ENCODE measurements at regions of chr2 and their contacts with region 1.

Region 1: DNA sequence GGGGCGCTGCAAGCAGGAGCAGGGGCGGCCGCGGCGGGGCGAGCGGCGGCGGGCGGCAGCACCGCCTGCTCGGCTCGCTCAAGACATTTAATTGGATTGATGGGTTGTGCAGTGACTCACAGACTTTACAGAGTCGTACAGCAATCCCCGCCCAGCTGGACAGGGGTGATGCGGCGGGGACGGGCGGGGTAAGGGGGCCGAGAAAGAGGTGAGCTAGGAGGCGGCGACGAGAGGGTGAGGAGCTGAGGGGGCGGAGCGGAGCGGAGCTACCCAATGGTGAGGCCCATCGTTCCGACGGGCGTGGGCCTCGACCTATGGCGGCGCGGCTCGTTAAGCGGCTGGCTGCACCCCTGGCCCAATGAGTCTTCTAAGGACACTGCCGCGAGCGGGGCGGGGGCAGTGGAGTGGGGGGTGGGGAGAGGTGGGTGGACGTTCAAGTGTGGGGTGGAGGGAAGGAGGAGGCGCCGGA is 97.1 kb upstream of the SERTAD2 start:
- DNase-seq: peak; percentile 97 to 99 (median 97)
- ATAC-seq: peak; percentile 91
- H3K4me3 ChIP-seq: peak overlapping the region; percentile 79
- H3K27ac ChIP-seq: peak overlapping the region; percentile 84
- H3K4me1 ChIP-seq: peaks cover 11 to 18% of the 10 kb centered on the region in 2 experiments; a peak in 4 of 5 replicates
- H3K27me3 ChIP-seq: no peaks in the 10 kb centered on the region
- CTCF ChIP-seq: peak in 1 of 3 experiments; percentile 53; a peak in 2 of 6 replicates
- EP300 ChIP-seq: no peak
- POLR2A ChIP-seq: no peak
- RAD21 ChIP-seq: peak in 1 of 2 experiments; percentile 55; a peak in 2 of 4 replicates

Region 2: DNA sequence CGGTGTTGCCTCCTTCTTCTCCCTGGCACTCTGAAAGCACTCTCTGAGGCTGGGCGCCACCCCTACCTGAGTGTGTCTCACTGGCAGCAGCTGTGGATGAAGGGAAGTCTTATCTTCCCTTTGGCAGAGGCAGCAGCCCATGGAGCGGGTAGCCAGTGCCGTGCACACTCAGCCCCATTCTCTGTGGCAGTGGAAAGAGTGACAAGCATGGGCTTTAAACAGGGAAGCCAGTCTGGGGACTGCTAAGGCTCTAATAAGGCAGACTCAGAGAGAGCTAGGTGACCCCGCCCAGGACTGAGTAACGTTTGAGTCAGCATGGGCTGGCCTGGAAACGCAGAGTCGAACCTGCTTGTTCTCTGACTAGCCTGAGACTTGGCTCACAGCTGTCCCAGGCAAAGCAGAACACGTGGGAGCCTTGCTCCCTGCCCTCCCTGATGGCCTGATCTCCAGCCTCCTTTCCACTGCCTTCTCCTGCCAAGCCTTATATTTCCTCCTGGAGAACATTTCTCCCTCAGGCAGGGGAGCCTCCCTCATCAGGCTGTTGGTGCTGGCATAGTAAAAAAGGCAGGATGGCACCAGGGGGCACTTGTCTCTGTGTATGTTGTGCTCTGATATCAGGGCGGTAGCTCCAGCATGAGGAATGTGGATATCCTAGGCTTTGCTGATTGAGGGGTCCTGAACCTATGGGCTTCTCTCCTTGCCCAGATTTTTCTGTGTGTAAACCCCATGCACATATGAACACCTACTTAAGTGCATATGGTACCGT is 390.8 kb before region 1 on chr2:
- CTCF ChIA-PET with region 1: no interaction called
- POLR2A ChIA-PET with region 1: no interaction called
- in situ Hi-C with region 1: no loop called
- intact Hi-C with region 1: no loop called
- DNase-seq: peak; percentile 15 to 52 (median 28)
- ATAC-seq: peak; percentile 67
- H3K4me3 ChIP-seq: no peak overlapping the region
- H3K27ac ChIP-seq: no peak overlapping the region
- H3K4me1 ChIP-seq: peaks cover 0 to 3% of the 10 kb centered on the region in 2 experiments; a peak in 1 of 5 replicates
- H3K27me3 ChIP-seq: peaks cover 13 to 58% of the 10 kb centered on the region in 2 experiments; a peak in 4 of 5 replicates
- CTCF ChIP-seq: no peak
- EP300 ChIP-seq: no peak
- POLR2A ChIP-seq: no peak
- RAD21 ChIP-seq: no peak

Region 3: GRCh38 chr2:64831134-64831976 is 80.5 kb after region 1 on chr2:
- CTCF ChIA-PET with region 1: no interaction called
- POLR2A ChIA-PET with region 1: no interaction called
- in situ Hi-C with region 1: no loop called
- intact Hi-C with region 1: loop called (anchors 5 kb)
- DNase-seq: peak; percentile 90 to 94 (median 92)
- ATAC-seq: peak; percentile 99
- H3K4me3 ChIP-seq: no peak overlapping the region
- H3K27ac ChIP-seq: peak overlapping the region; percentile 94
- H3K4me1 ChIP-seq: peaks cover 10 to 27% of the 10 kb centered on the region in 2 experiments
- H3K27me3 ChIP-seq: no peaks in the 10 kb centered on the region
- CTCF ChIP-seq: peak; percentile 91 to 98 (median 91)
- EP300 ChIP-seq: peak; percentile 29; the same call in 1 of the 2 replicates
- POLR2A ChIP-seq: 0 out of 2 replicates have a peak, but pooled peaks have one; percentile 52
- RAD21 ChIP-seq: peak; percentile 79 to 80

Region 4: GRCh38 chr2:64859312-64860212 is 108.7 kb after region 1 on chr2:
- CTCF ChIA-PET with region 1: no interaction called
- POLR2A ChIA-PET with region 1: interaction called, 6 read pairs
- in situ Hi-C with region 1: no loop called
- intact Hi-C with region 1: loop called (anchors 2 kb)
- DNase-seq: peak; percentile 76 to 92 (median 91)
- ATAC-seq: peak; percentile 92
- H3K4me3 ChIP-seq: peak overlapping the region; percentile 29
- H3K27ac ChIP-seq: peak overlapping the region; percentile 67
- H3K4me1 ChIP-seq: peaks cover 28 to 33% of the 10 kb centered on the region in 2 experiments
- H3K27me3 ChIP-seq: no peaks in the 10 kb centered on the region
- CTCF ChIP-seq: peak in 2 of 3 experiments; percentile 9 to 22; a peak in 1 of 6 replicates
- EP300 ChIP-seq: no peak
- POLR2A ChIP-seq: peak; percentile 68; the same call in 1 of the 2 replicates
- RAD21 ChIP-seq: peak in 1 of 2 experiments; percentile 22; a peak in 2 of 4 replicates

Measured in K562 (cell line).